Dorsolateral prefrontal cortex (tissue), 120 donors: ENCODE measurements at regions of chr5 and their contacts with region 1.

Region 1: DNA sequence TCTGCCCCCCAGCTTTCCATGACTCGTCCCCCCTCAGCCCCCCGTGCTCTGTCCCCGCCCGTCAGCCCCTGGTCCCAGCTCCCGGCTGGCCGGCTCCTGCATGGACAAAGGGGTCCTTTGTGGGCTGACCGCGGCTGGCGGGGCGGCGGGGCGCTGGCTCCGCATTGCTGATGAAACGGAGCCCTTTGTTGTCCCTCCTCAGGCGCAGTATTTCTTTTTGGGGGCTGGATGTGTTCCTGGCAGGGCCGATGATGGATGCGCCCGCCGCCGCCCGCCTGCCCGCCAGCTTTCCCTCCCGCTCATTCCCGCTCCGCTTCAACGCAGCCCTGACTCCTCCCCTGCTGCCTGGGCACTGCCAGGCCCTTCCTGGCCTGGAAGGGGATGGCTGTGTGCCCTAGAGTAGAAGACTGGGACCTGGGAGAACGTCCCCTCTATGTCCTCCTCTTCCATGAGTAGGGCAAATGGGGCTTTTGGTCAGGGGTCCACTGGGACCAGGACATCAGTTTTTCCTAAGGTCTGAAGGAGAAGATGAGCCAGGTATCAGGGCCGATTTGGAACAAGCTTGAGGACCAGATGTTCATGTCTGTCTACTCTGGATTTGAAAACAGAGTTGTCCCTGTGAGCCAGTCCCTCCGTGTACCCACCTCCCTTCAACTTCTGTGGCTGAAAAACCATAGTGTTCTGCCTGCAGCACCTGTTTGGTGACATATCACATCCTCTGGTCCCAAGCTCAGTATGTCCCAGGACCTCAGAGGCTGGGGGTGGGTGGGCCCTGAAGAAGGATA is 29.0 kb downstream of the CXXC5 start:
- DNase-seq: peak; percentile 83 to 93 (median 92)
- H3K4me3 ChIP-seq: peak overlapping the region in 46 of 59 donors; percentile 3 to 51 (median 28)
- H3K27ac ChIP-seq: peak overlapping the region; percentile 82 to 100 (median 98)
- H3K27me3 ChIP-seq: no peaks in the 10 kb centered on the region
- CTCF ChIP-seq: peak in 3 of 56 donors; percentile 4 to 21 (median 6)

Region 2: DNA sequence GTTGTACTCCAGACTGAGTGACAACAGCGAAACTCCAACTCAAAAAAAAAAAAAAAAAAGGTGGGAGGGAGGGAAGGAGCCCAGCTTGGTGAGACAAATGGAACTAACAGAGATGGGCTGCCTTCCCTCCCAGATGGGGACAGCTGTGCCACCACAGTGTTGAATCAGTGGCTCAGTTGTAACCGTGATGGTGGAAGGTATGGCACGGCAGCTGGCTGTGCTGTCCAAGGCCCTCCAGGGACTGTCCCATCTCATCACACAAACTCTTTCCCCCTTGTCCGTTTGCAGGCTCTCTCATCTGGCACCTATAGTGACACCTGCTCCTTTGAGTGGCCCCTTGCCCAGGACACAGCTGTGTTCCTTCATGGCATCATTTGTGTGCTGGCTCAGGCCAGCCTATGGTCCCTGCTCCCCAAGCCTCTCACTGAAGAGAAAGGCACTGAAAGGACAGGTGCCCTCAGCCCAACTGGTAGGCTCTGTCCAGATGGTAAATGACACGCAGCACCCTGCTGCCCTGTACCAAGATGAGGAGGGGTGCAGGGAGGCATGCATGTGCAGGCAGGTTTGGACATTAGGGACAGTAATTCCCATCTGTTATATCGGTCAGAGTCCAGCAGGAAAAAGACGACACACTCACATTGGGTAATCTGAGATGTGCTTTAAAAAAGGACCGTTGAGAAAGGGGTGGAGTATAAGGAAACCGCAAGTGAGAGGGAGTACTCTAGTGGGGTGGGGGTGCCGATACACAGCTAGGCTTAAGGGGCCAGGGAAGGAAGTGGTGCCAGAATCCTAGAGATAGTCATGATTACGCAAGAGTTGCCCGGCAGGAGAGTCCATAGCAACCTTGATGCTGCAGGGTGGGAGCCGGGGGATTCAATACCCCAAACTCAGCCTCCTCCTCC is 202.0 kb before region 1 on chr5:
- intact Hi-C with region 1: no loop called
- DNase-seq: no peak
- H3K4me3 ChIP-seq: no peak overlapping the region
- H3K27ac ChIP-seq: no peak overlapping the region
- H3K27me3 ChIP-seq: no peaks in the 10 kb centered on the region
- CTCF ChIP-seq: no peak

Region 3: DNA sequence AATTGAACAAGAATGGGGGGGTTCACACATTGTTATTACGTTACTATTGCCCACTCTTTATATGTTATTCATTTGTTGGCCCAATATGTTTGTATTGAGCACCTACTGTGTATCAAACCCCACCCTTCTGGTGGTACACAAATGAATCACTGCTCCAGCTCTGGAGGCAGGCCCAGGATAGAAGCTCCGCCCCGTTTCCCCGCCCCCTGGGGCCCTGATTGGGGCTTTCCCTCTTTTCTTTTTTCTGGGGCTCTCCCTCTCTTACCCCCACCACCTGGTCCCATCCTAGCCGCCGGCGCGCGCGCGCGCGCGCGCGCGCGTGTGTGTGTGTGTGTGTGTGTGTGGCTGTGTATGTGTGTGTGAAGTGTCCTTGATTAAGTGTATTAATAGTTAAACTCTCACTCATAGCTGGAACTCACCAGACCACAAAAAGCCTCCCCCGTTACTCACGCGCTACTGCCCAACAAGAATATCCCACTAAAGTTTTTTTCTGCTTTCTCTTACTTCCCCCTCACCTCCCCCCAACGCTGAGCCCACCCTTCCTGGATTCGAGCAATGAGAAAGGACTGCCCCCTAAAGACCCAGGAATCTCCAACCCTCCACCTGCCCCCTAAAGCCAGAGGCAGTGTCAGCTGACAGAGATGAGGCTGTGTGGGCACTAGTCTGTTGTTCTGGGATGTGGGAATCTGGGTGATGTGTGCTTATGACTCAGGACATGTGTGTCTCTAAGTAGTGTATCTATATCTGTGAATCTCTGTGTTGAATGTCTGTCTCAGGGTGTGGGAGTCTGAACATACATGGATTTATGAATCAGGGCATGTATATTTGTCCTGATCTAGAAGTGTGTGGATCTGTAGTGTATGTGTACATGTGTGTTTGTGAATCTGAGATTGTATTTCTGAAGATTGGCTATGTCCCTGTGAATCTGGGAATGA is 25.0 kb before region 1 on chr5:
- intact Hi-C with region 1: loop called in 1 of 2 experiments (anchors 2 kb)
- DNase-seq: peak; percentile 81 to 97 (median 94)
- H3K4me3 ChIP-seq: peak overlapping the region; percentile 16 to 99 (median 94)
- H3K27ac ChIP-seq: peak overlapping the region; percentile 90 to 100 (median 99)
- H3K27me3 ChIP-seq: no peaks in the 10 kb centered on the region
- CTCF ChIP-seq: peak in 5 of 56 donors; percentile 7 to 32 (median 22)

Region 4: GRCh38 chr5:139725073-139725830 is 48.1 kb after region 1 on chr5:
- intact Hi-C with region 1: no loop called
- DNase-seq: peak in 8 of 10 donors; percentile 43 to 87 (median 62)
- H3K4me3 ChIP-seq: no peak overlapping the region
- H3K27ac ChIP-seq: peak overlapping the region in 56 of 59 donors; percentile 9 to 89 (median 76)
- H3K27me3 ChIP-seq: no peaks in the 10 kb centered on the region
- CTCF ChIP-seq: peak in 1 of 56 donors; percentile 10